Activated naive CD4-positive, alpha-beta T cell treated with anti-CD3 and anti-CD28 coated beads for 36 hours (primary cell): ENCODE measurements at regions of chr9 and their contacts with region 1.

Region 1: DNA sequence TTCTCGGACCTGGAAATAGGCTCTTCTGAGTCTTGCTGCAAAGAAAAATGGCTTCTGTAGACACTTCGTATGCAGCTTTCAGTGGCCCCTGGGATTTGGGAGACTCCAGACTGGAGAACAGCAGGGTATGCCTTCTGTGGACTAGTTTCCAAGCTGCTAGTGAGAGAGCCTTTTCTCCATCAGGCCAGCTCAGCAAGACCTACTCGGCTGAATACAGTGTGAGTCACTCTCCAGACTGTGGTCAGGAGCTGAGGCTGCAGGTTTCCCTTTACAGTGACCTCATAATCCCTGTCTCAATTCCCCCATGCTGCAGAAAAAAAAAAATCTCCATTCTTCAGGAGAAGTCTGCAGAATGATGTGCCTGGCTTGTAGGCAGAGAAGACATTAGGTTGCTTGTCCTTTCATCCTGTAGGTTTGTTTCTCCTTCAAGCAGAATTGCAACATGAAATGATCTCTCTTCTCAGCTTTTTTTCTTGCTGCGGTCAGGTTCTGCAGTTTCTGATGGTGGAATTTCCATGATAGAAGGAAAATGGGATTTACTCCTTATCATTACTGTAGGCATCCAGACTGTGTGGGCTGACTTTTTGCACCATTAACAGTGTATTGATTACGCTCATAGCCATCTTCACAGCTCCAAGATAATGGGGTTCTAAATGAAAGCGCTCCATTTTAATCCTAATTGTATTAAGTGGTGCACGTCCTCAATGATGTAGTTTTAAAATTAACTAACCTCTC is 78.3 kb upstream of the TNFSF8 start:
- DNase-seq: peak; percentile 41
- H3K4me3 Mint-ChIP-seq: no peak overlapping the region
- H3K27ac Mint-ChIP-seq: no peak overlapping the region
- H3K4me1 Mint-ChIP-seq: peaks cover 81% of the 10 kb centered on the region
- H3K27me3 Mint-ChIP-seq: no peaks in the 10 kb centered on the region

Region 2: DNA sequence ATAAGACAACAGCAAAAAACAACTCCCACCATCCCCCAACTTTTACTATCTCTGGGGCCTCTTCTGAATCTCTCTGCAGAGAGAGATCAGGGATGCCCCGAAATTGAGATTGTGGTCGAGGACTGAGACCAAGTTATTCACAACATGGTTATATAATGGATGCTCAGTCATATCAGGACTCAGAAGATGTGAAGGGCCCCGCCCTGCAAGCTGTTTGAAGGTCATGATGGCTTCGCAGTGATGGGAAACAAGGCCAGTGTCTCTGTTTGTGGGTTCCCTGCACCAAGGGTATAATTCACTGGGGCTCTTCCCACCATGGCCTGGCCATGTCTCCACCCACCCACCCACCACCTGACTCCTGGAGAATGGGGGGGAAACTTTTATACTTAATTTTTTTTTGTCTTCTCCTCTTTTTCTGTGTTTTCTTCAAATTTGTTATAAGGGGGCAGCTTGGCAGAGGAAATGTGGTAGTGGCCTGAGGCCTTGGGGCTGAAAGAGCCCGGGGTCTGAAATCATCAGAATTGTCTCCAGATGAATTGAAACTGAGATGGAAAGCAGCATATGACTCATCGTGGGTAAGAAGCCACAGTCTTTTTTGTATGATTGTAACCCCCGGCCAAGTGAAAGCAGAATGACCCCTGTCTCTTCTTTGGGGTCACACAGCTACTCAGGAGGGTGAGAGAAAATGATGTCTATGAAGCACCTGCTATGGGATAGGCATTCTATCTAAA is 311.7 kb before region 1 on chr9:
- CTCF ChIA-PET with region 1: interaction called, 3 read pairs
- intact Hi-C with region 1: loop called (anchors 1 kb)
- DNase-seq: peak; percentile 89
- H3K4me3 Mint-ChIP-seq: peak overlapping the region; percentile 54
- H3K27ac Mint-ChIP-seq: peak overlapping the region; percentile 98
- H3K4me1 Mint-ChIP-seq: peaks cover 74% of the 10 kb centered on the region
- H3K27me3 Mint-ChIP-seq: no peaks in the 10 kb centered on the region

Region 3: GRCh38 chr9:114805670-114806525 is 202.8 kb before region 1 on chr9 and contains the start of gene TNFSF15:
- CTCF ChIA-PET with region 1: no interaction called
- intact Hi-C with region 1: loop called (anchors 2 kb)
- DNase-seq: peak; percentile 75
- H3K4me3 Mint-ChIP-seq: peak within 1 kb of the TSS; percentile 63
- H3K27ac Mint-ChIP-seq: peak within 1 kb of the TSS; percentile 26
- H3K4me1 Mint-ChIP-seq: peaks cover 28% of the 10 kb centered on the region
- H3K27me3 Mint-ChIP-seq: no peaks in the 10 kb centered on the region
- total RNA-seq, gene TNFSF15: 0.62 to 0.74 TPM

Region 4: GRCh38 chr9:114953917-114954316 is 54.8 kb before region 1 on chr9:
- CTCF ChIA-PET with region 1: no interaction called
- intact Hi-C with region 1: loop called (anchors 2 kb)
- DNase-seq: peak; percentile 62
- H3K4me3 Mint-ChIP-seq: no peak overlapping the region
- H3K27ac Mint-ChIP-seq: peak overlapping the region; percentile 8
- H3K4me1 Mint-ChIP-seq: peaks cover 33% of the 10 kb centered on the region
- H3K27me3 Mint-ChIP-seq: no peaks in the 10 kb centered on the region